KBM-7 (cell line): ENCODE measurements at regions of chr4 and their contacts with region 1.

Region 1: GRCh38 chr4:81471588-81472288 is at the start of gene RASGEF1B:
- DNase-seq: peak; percentile 64

Region 2: DNA sequence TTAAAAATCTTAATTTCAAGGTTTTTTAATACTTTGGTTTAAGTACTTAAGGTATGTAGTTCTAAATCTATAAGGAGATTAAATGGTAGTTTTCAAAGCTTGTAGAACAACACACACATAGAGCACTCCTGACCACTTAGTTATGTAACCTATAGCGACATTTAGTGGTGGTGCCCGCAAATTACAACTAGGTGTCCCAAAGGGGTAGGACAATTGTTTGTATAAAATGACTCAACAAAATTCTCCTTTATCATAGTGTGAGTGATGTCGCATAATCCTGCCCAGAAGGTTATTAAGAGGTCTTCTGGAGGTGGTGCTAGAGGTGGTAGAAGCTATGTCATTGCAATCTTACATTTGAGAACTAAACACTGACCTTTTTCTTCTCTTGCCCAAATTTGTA is 373.0 kb after region 1 on chr4:
- in situ Hi-C with region 1: loop called (anchors 25 kb)
- DNase-seq: peak; percentile 73